ENCODE measurements at regions of chr11 and their contacts with region 1.

Region 1: DNA sequence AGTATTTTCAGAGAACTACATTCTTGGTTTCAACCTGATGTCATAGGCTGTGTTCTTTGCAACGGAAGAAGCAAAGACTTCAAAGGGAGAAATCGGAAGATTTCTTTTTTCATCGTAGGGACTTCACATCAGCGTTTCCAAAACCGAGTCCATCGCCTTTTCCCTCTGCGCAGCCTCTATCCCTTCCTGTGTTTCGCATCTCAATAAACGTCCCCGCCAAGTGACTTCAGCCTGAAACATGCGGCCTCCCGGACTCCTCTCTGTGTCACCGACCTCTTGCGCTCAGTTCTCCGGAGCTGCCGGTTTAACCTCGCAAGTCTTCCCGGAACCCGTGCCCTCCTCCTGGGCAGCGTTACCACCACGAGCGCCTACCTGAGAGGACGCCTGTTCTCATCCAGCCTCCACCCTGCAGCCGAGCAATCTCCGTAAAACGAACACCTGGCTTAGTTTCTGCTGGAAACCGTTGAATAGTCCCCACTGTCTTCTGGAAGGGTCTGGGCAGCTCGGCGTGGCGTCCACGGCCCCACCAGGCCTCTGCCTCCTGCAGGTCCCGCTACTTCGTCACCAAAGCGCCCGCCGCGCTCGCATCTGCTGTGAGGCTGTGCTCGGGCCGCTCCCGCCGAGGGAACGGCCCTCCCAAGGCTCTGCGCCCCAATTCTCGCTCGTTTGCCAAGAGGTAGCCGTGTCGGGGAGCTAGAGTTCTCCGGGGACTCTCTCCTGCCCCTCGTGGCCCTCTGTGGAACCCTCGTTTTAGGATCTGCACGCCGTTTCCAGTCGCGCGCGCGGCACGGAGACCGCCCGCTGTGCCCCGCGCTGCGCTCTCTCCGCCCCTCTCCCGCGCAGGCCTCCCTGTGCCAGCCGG is at the start of gene GLB1L3:
- DNase-seq: peak; percentile 87
- ATAC-seq: peak; percentile 89
- H3K4me3 Mint-ChIP-seq: peak within 1 kb of the TSS; percentile 88
- H3K27ac Mint-ChIP-seq: peak within 1 kb of the TSS; percentile 96
- H3K4me1 Mint-ChIP-seq: peaks cover 35% of the 10 kb centered on the region
- H3K27me3 Mint-ChIP-seq: peaks cover 4% of the 10 kb centered on the region
- CTCF ChIP-seq: peak; percentile 52
- total RNA-seq, gene GLB1L3: 11.2 to 11.9 TPM

Region 2: GRCh38 chr11:134261626-134262488 is 13.9 kb before region 1 on chr11:
- CTCF ChIA-PET with region 1: interaction called, 76 read pairs
- POLR2A ChIA-PET with region 1: interaction called, 10 read pairs
- intact Hi-C with region 1: no loop called
- DNase-seq: peak; percentile 51
- ATAC-seq: peak; percentile 87
- H3K4me3 Mint-ChIP-seq: no peak overlapping the region
- H3K27ac Mint-ChIP-seq: no peak overlapping the region
- H3K4me1 Mint-ChIP-seq: no peaks in the 10 kb centered on the region
- H3K27me3 Mint-ChIP-seq: no peaks in the 10 kb centered on the region
- CTCF ChIP-seq: peak; percentile 32

Region 3: GRCh38 chr11:134331354-134332188 is 55.8 kb after region 1 on chr11 and contains the start of gene GLB1L2:
- CTCF ChIA-PET with region 1: interaction called, 3 read pairs
- POLR2A ChIA-PET with region 1: interaction called, 13 read pairs
- intact Hi-C with region 1: no loop called
- DNase-seq: peak; percentile 72
- ATAC-seq: peak; percentile 97
- H3K4me3 Mint-ChIP-seq: peak within 1 kb of the TSS; percentile 76
- H3K27ac Mint-ChIP-seq: no peak within 1 kb of the TSS
- H3K4me1 Mint-ChIP-seq: peaks cover 12% of the 10 kb centered on the region
- H3K27me3 Mint-ChIP-seq: peaks cover 20% of the 10 kb centered on the region
- CTCF ChIP-seq: no peak
- total RNA-seq, gene GLB1L2: 4.7 to 6.0 TPM

Region 4: DNA sequence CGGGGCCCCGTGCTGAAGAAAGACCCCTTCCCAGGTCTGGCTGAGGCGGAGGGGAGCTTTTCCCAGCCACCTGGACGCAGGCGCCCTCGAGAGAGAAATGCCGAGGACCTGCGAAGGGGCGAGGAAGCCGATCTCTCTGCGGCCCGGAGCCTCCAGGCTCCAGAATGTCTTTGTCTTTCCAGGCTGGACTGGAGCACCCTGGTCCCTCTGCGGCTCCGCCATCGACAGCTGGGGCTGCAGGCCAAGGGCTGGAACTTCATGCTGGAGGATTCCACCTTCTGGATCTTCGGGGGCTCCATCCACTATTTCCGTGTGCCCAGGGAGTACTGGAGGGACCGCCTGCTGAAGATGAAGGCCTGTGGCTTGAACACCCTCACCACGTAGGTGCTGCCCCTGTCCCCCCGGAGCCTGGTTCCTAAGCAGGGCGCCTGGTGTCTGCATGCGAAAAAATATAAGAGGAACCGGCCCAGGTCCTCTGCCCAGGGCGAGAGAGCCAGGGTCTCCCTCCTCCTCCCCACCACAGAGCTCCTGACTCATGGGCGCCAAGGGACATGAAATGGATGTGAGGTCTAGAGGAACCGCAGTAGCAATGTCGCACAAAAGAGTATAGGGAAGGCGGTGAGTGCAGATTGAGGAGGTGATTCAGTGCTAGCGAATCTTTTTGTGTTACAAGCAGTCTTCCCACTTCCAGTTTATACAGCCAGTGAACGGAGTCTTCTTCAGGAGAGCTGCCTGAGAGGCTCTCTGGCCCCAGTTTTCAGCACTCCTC is 67.0 kb after region 1 on chr11:
- CTCF ChIA-PET with region 1: no interaction called
- POLR2A ChIA-PET with region 1: no interaction called
- intact Hi-C with region 1: no loop called
- DNase-seq: no peak
- ATAC-seq: no peak
- H3K4me3 Mint-ChIP-seq: no peak overlapping the region
- H3K27ac Mint-ChIP-seq: no peak overlapping the region
- H3K4me1 Mint-ChIP-seq: no peaks in the 10 kb centered on the region
- H3K27me3 Mint-ChIP-seq: no peaks in the 10 kb centered on the region
- CTCF ChIP-seq: no peak